ENCODE measurements at regions of chr9 and their contacts with region 1.

Region 1: DNA sequence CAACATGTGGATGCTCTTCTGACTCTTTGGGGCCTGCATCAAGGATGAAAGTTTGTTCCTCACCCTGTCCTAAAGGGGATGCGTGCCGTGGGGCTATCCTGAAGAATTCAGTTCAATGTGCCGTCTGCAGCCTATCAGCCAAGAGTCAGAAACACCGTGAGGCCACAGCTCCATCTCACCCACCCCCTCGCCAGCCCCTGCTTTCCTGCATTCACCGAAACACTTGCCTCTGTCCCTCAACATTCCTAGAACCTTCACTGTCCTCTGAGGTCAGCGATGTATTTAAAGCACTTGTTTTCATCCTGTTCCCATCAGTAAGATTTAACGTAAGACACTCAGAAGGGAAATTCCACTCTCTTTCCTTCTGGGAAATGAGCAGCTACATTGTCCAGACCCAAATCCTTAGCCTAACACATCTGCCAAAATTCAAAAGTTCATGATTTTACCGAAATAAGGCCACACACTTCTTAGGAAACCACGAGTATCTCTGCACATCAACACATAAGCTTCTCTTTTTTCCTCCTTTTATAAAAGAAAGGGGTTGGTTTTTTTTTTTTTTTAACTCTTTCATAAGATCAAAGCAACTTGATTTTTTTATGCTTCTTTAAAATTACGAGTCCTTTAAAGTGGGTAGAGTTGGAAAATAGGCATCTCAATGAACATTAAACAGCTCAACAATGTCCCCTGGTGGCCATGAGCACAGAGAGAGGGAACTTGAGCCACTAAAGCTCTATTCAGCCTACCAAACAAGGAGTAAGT is 100.7 kb downstream of the SUSD1 start:
- DNase-seq: peak; percentile 57 to 85 (median 74)
- H3K4me3 ChIP-seq: no peak overlapping the region
- H3K27ac ChIP-seq: peak overlapping the region in 3 of 5 donors; percentile 43 to 85 (median 70)
- H3K4me1 ChIP-seq: peaks cover 10 to 29% of the 10 kb centered on the region in 2 donors
- H3K27me3 ChIP-seq: no peaks in the 10 kb centered on the region
- CTCF ChIP-seq: peak; percentile 60 to 99 (median 96)
- POLR2A ChIP-seq: no peak

Region 2: GRCh38 chr9:111759762-111760639 is 314.4 kb before region 1 on chr9:
- intact Hi-C with region 1: loop called (anchors 2 to 10 kb)
- DNase-seq: peak; percentile 29 to 71 (median 64)
- H3K4me3 ChIP-seq: no peak overlapping the region
- H3K27ac ChIP-seq: peak overlapping the region in 1 of 5 donors; percentile 10
- H3K4me1 ChIP-seq: peaks cover 0 to 5% of the 10 kb centered on the region in 2 donors
- H3K27me3 ChIP-seq: no peaks in the 10 kb centered on the region
- CTCF ChIP-seq: peak; percentile 67 to 88 (median 78)
- POLR2A ChIP-seq: no peak

Region 3: DNA sequence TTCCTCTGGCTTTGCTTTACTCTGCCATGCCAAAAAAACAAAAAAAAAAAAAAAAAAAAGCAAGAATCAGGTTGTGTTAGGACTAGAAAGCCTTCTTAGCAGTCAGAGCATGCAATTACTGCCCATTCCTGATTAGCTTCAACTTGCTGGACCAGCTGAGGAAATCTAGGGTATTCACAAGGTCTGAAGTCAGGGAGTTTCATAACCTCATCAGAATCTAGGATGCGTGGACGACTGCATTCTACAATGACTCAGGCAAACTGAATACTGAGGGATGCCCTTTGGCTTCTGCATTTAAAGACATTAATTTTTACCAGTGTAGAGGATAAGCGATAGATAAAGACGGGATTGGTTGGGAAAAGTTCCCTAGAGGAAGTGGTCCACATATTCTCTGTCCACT is 240.5 kb before region 1 on chr9:
- intact Hi-C with region 1: loop called in 1 of 2 experiments (anchors 5 kb)
- DNase-seq: peak in 4 of 7 donors; percentile 35 to 63 (median 41)
- H3K4me3 ChIP-seq: no peak overlapping the region
- H3K27ac ChIP-seq: peak overlapping the region in 1 of 5 donors; percentile 58
- H3K4me1 ChIP-seq: peaks cover 2 to 3% of the 10 kb centered on the region in 2 donors
- H3K27me3 ChIP-seq: no peaks in the 10 kb centered on the region
- CTCF ChIP-seq: no peak
- POLR2A ChIP-seq: no peak

Region 4: GRCh38 chr9:111909441-111909840 is 165.0 kb before region 1 on chr9:
- intact Hi-C with region 1: loop called in 1 of 2 experiments (anchors 10 kb)
- DNase-seq: no peak
- H3K4me3 ChIP-seq: no peak overlapping the region
- H3K27ac ChIP-seq: peak overlapping the region in 3 of 5 donors; percentile 7 to 28 (median 11)
- H3K4me1 ChIP-seq: peaks cover 15 to 77% of the 10 kb centered on the region in 2 donors
- H3K27me3 ChIP-seq: no peaks in the 10 kb centered on the region
- CTCF ChIP-seq: no peak
- POLR2A ChIP-seq: no peak